Heart right ventricle (tissue), 16 donors: ENCODE measurements at regions of chr5 and their contacts with region 1.

Region 1: DNA sequence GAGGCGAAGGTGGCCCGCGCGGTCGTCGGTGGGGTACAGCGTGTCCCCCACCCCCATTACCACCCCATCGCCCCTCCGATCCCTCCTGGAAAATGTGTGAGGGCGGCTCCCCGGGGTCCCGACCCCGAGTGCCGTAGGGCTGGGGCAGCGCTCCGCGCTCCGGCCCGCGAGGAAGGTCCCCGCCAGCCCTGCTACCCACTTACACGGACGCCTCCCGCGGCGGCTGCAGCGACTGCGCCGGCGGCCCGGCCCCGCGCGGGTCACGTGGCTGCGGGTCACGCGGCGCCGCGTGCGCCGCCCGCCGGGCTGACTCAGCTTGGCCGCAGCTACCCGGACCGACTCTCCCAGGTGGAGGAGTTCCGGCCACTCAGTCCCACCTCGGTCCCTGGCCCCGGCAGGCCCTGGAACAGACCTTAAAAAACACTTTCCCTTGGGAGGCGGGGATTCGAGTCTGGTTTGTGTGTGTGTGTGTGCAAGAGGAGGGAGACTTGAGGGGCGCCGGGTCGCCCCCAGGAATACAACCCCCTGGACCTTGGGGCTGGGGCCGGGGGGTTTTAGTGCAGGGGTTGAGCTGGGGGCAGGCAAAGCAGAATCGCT is at the start of gene GNPDA1:
- DNase-seq: peak; percentile 82 to 83
- ATAC-seq: peak; percentile 88 to 98 (median 92)
- H3K4me3 ChIP-seq: peak within 1 kb of the TSS; percentile 45 to 85 (median 77)
- H3K27ac ChIP-seq: peak within 1 kb of the TSS; percentile 18 to 94 (median 87)
- H3K4me1 ChIP-seq: peaks cover 0 to 51% (median 10%) of the 10 kb centered on the region in 9 donors
- H3K27me3 ChIP-seq: no peaks in the 10 kb centered on the region
- CTCF ChIP-seq: peak in 3 of 9 donors; percentile 20 to 38 (median 26)
- total RNA-seq, gene GNPDA1: 18.9 to 24.3 (median 20.9) TPM

Region 2: DNA sequence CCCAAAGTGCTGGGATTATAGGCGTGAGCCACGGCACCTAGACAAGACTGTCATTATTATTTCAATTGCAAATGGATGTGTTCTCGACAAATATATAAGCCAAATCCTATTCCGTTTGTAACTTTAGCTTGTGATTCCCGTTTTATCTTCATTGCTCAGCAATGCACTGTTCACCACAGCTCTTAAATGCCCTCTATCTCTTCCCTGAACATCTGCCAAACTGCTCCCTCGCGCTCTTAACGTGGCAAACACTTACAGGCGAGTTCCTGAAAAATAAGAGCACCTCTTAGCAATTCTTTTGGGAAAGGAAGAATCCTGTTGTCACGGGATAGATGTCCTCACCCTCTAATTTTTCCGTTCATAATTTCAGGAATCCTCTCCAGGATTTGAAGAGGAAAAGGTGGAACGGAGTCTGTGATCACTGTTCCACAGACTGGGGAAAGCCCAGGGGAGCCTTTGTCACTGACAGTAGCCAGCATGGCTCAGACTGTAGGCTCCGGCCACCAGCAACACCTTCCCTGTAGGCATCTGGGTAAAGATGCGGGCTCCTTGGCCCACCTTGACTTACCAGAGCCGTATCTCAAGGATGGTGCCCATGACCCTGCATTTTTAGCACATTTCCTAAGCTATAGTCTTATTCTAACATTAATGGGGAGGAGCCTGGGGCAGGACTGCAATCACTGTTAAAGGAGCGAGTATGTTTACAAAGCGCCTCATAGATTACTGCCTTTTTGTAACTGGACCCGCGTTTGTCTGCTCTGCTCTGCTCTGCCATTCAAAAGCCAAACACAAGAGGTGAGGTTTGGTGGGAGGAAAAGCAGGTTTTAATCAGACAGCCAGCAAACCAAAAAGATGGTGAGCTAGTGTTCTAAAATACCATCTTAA is 20.1 kb after region 1 on chr5:
- intact Hi-C with region 1: no loop called
- DNase-seq: peak in 1 of 2 donors; percentile 20
- ATAC-seq: peak in 3 of 8 donors; percentile 44 to 81 (median 53)
- H3K4me3 ChIP-seq: no peak overlapping the region
- H3K27ac ChIP-seq: no peak overlapping the region
- H3K4me1 ChIP-seq: peaks cover 0 to 8% (median 0%) of the 10 kb centered on the region in 9 donors
- H3K27me3 ChIP-seq: no peaks in the 10 kb centered on the region
- CTCF ChIP-seq: no peak

Region 3: DNA sequence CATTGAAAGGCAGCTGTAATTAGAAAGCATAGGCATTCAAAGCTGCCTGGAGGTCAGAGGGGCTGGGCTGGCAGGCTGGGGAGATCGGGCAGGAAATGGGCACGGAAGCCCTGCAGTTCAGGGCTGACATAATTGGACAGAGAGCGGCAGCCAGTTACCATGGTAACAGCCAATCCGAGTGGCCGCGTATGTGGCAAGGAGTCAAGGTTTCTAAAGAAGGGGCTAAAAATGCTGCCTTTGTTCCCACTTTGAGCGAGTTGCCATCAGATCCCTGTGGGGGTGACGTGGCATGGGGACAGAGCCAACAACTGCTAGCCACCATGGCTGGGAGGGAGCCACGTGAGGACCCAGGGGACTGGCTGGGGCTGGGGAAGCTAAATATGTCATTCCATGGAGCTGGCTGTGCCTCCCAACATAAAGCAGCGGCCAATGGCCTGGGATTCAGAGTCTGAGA is 51.0 kb after region 1 on chr5:
- intact Hi-C with region 1: loop called in 2 of 10 experiments (anchors 5 kb)
- DNase-seq: peak; percentile 77 to 81
- ATAC-seq: peak; percentile 84 to 92 (median 88)
- H3K4me3 ChIP-seq: peak overlapping the region in 7 of 10 donors; percentile 2 to 41 (median 36)
- H3K27ac ChIP-seq: peak overlapping the region in 8 of 10 donors; percentile 31 to 80 (median 71)
- H3K4me1 ChIP-seq: peaks cover 0 to 36% (median 16%) of the 10 kb centered on the region in 9 donors
- H3K27me3 ChIP-seq: no peaks in the 10 kb centered on the region
- CTCF ChIP-seq: no peak

Region 4: GRCh38 chr5:142087920-142088679 is 75.2 kb after region 1 on chr5:
- intact Hi-C with region 1: no loop called
- DNase-seq: no peak
- ATAC-seq: no peak
- H3K4me3 ChIP-seq: no peak overlapping the region
- H3K27ac ChIP-seq: no peak overlapping the region
- H3K4me1 ChIP-seq: no peaks in the 10 kb centered on the region
- H3K27me3 ChIP-seq: no peaks in the 10 kb centered on the region
- CTCF ChIP-seq: no peak

Region 5: GRCh38 chr5:142108432-142109330 is 95.8 kb after region 1 on chr5 and contains the start of gene NDFIP1:
- intact Hi-C with region 1: loop called in 2 of 10 experiments (anchors 5 kb)
- DNase-seq: peak; percentile 86 to 92
- ATAC-seq: peak; percentile 95 to 99 (median 98)
- H3K4me3 ChIP-seq: peak within 1 kb of the TSS; percentile 73 to 95 (median 85)
- H3K27ac ChIP-seq: peak within 1 kb of the TSS; percentile 96 to 100 (median 98)
- H3K4me1 ChIP-seq: peaks cover 0 to 61% (median 38%) of the 10 kb centered on the region in 9 donors
- H3K27me3 ChIP-seq: no peaks in the 10 kb centered on the region
- CTCF ChIP-seq: peak in 4 of 9 donors; percentile 5 to 39 (median 28)
- total RNA-seq, gene NDFIP1: 52.7 to 67.4 (median 60.7) TPM

Region 6: GRCh38 chr5:142120247-142120935 is 107.5 kb after region 1 on chr5:
- intact Hi-C with region 1: loop called in 1 of 10 experiments (anchors 5 kb)
- DNase-seq: no peak
- ATAC-seq: no peak
- H3K4me3 ChIP-seq: no peak overlapping the region
- H3K27ac ChIP-seq: no peak overlapping the region
- H3K4me1 ChIP-seq: peaks cover 3 to 73% (median 52%) of the 10 kb centered on the region in 9 donors
- H3K27me3 ChIP-seq: no peaks in the 10 kb centered on the region
- CTCF ChIP-seq: no peak

Region 7: DNA sequence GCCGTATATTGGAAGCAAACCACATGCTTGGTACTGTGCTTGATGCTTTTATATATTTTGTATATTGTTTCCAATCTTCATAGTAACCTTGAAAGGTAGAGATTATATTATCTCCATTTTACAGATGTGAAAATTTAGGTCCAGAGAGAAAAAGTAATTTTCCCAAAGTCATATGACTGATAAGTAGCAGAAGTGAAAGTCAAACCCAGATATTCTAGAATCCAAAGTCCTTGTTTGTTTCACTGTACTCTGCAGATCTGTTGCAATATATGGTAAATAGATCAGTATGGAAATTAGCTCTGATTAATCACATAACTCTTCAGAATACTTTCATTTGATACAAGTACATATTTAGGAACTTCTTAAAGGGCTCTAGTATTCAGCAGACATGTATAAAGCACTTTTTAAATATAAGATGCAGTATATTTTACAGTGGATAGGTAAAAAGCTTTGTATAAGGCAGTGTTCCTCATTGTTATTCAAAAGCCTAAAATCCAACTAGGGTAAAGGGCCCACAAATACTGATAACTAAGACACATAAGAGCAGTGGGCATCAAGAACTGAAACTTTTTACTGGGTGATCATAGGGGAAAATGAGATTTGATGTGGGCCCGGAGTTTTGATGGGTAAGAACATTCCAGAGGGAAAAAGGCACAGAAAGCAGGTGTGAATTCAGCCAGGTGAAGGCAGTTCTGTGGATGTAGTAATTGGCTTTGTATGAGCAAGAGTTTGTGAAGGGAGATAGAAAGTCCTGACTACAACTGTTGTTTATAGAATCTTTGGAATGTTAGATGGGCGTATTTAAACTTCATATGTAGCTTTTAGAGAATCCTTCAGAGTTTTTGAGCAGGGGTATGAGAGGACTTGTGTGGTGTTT is 120.7 kb after region 1 on chr5:
- intact Hi-C with region 1: loop called in 1 of 10 experiments (anchors 5 kb)
- DNase-seq: no peak
- ATAC-seq: no peak
- H3K4me3 ChIP-seq: no peak overlapping the region
- H3K27ac ChIP-seq: peak overlapping the region in 1 of 10 donors; percentile 34
- H3K4me1 ChIP-seq: peaks cover 0 to 31% (median 11%) of the 10 kb centered on the region in 9 donors
- H3K27me3 ChIP-seq: no peaks in the 10 kb centered on the region
- CTCF ChIP-seq: no peak

Region 8: GRCh38 chr5:142145106-142145900 is 132.4 kb after region 1 on chr5:
- intact Hi-C with region 1: loop called in 5 of 10 experiments (anchors 2 to 5 kb)
- DNase-seq: peak in 1 of 2 donors; percentile 80
- ATAC-seq: peak; percentile 71 to 91 (median 84)
- H3K4me3 ChIP-seq: no peak overlapping the region
- H3K27ac ChIP-seq: no peak overlapping the region
- H3K4me1 ChIP-seq: peaks cover 0 to 8% (median 0%) of the 10 kb centered on the region in 9 donors
- H3K27me3 ChIP-seq: no peaks in the 10 kb centered on the region
- CTCF ChIP-seq: peak; percentile 59 to 80 (median 72)